PC-9 (cell line): ENCODE measurements at regions of chr1 and their contacts with region 1.

Region 1: DNA sequence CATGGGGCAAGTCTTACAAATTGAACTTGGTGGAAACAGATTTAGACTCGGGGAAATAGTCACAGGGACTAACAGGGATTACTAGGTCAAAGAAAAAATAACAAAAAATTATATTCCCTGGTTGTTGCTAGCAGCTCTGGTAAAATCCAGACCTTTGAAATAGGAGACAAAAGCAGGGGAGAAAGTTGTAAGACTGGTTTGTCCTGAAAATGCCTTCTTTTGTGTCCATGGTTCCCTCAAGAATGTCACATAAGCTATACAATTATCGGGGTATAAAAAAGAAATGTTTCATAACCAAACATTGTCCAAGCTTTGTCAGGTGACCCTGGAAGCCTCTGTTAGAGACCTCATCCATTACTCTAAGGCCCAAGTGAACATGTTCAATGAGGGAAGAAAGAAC is 33.1 kb downstream of the KIAA0319L start:
- DNase-seq: peak in 1 of 2 experiments; percentile 63
- H3K4me3 ChIP-seq: no peak overlapping the region
- H3K27ac ChIP-seq: no peak overlapping the region
- H3K4me1 ChIP-seq: no peaks in the 10 kb centered on the region; the same call in 1 of the 2 replicates
- H3K27me3 ChIP-seq: no peaks in the 10 kb centered on the region
- CTCF ChIP-seq: no peak

Region 2: GRCh38 chr1:35505908-35506798 is 18.0 kb before region 1 on chr1:
- CTCF ChIA-PET with region 1: no interaction called
- POLR2A ChIA-PET with region 1: no interaction called
- intact Hi-C with region 1: loop called (anchors 1 kb)
- DNase-seq: peak; percentile 77 to 98
- H3K4me3 ChIP-seq: no peak overlapping the region
- H3K27ac ChIP-seq: peak overlapping the region; percentile 71
- H3K4me1 ChIP-seq: peaks cover 51% of the 10 kb centered on the region
- H3K27me3 ChIP-seq: no peaks in the 10 kb centered on the region
- CTCF ChIP-seq: no peak

Region 3: DNA sequence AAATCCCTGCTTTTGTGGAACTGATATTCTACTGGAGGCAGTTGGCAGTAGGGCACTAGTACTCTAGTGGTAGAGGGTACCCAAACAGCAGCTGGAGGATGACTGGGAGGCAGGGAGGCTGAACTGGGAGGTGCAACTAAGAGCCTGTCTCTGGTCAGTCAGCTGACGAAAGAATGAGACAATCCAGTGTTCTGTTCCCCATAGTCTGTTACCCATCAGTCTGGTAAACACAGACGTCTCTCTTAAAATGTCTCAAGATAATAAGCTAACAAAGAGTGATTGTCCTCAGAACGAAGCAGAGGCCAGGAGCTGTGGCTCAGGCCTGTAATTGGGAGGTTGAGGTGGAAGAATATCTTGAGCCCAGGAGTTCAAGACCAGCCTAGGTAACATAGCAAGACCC is 79.4 kb after region 1 on chr1:
- CTCF ChIA-PET with region 1: interaction called, 12 read pairs
- POLR2A ChIA-PET with region 1: no interaction called
- intact Hi-C with region 1: no loop called
- DNase-seq: no peak
- H3K4me3 ChIP-seq: no peak overlapping the region
- H3K27ac ChIP-seq: no peak overlapping the region
- H3K4me1 ChIP-seq: no peaks in the 10 kb centered on the region
- H3K27me3 ChIP-seq: no peaks in the 10 kb centered on the region
- CTCF ChIP-seq: no peak